Naive thymus-derived CD4-positive, alpha-beta T cell (primary cell): ENCODE measurements at regions of chr19 and their contacts with region 1.

Region 1: DNA sequence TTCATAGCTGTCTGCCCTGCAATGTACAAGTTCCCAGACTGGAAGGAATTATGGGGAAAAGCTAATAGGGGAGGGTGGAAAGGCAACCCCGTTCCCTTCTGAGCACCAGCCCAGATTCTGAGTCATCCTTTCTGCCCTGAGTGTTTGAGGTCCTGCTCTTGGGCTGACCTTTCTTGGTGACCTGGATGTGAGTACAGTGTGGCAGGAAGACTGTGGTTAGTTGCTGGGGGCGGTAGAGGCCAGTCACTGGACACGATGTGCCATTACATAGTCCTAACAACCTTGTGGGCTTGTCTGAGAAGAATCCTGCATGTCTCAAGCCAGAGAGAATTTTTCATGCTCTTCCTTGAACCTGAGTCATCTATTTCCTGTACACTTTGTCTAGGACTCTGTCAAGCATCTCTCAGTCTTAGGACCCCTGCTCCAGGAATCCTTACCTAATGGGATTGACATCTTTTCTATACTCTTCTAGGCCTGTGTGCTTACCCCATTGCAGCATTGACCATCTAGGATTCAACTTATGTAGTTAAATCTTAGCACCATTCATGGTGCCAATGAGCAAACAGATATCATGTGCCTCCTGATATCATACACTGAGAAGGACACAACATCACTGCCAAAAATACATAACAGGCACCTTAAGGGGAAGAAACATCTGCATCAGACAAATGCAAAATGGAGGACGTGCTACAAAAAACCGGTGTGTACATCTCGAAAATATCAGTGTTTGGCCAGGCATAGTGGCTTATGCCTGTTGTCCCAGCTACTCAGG is 8.1 kb upstream of the ANGPTL4 start:
- DNase-seq: no peak
- ATAC-seq: peak; percentile 72
- H3K4me3 ChIP-seq: no peak overlapping the region
- H3K4me3 Mint-ChIP-seq: no peak overlapping the region
- H3K27ac ChIP-seq: no peak overlapping the region
- H3K27ac Mint-ChIP-seq: no peak overlapping the region
- H3K4me1 ChIP-seq: no peaks in the 10 kb centered on the region
- H3K4me1 Mint-ChIP-seq: peaks cover 0 to 17% (median 3%) of the 10 kb centered on the region in 7 donors
- H3K27me3 ChIP-seq: no peaks in the 10 kb centered on the region
- H3K27me3 Mint-ChIP-seq: peaks cover 1 to 18% (median 14%) of the 10 kb centered on the region in 5 donors

Region 2: GRCh38 chr19:8240274-8241229 is 115.3 kb before region 1 on chr19:
- CTCF ChIA-PET with region 1: no interaction called
- POLR2A ChIA-PET with region 1: no interaction called
- intact Hi-C with region 1: no loop called
- DNase-seq: peak in 1 of 9 donors; percentile 20
- ATAC-seq: peak; percentile 87
- H3K4me3 ChIP-seq: no peak overlapping the region
- H3K4me3 Mint-ChIP-seq: peak overlapping the region in 3 of 10 donors; percentile 4 to 60 (median 22)
- H3K27ac ChIP-seq: no peak overlapping the region
- H3K27ac Mint-ChIP-seq: peak overlapping the region in 5 of 9 donors; percentile 25 to 69 (median 55)
- H3K4me1 ChIP-seq: peaks cover 8 to 15% of the 10 kb centered on the region in 2 donors
- H3K4me1 Mint-ChIP-seq: peaks cover 9 to 35% (median 16%) of the 10 kb centered on the region in 7 donors
- H3K27me3 ChIP-seq: no peaks in the 10 kb centered on the region
- H3K27me3 Mint-ChIP-seq: no peaks in the 10 kb centered on the region

Region 3: GRCh38 chr19:8396563-8397203 is 40.9 kb after region 1 on chr19:
- CTCF ChIA-PET with region 1: interaction called, 12 read pairs
- POLR2A ChIA-PET with region 1: no interaction called
- intact Hi-C with region 1: loop called (anchors 1 kb)
- DNase-seq: peak; percentile 36 to 72 (median 54)
- ATAC-seq: peak; percentile 93
- H3K4me3 ChIP-seq: no peak overlapping the region
- H3K4me3 Mint-ChIP-seq: peak overlapping the region in 2 of 10 donors; percentile 29 to 58
- H3K27ac ChIP-seq: no peak overlapping the region
- H3K27ac Mint-ChIP-seq: peak overlapping the region in 8 of 9 donors; percentile 1 to 93 (median 75)
- H3K4me1 ChIP-seq: peaks cover 0 to 8% of the 10 kb centered on the region in 2 donors
- H3K4me1 Mint-ChIP-seq: peaks cover 18 to 40% (median 35%) of the 10 kb centered on the region in 7 donors
- H3K27me3 ChIP-seq: no peaks in the 10 kb centered on the region
- H3K27me3 Mint-ChIP-seq: no peaks in the 10 kb centered on the region

Region 4: GRCh38 chr19:8487137-8487851 is 131.5 kb after region 1 on chr19:
- CTCF ChIA-PET with region 1: interaction called, 5 read pairs
- POLR2A ChIA-PET with region 1: no interaction called
- intact Hi-C with region 1: loop called in 1 of 2 experiments (anchors 10 kb)
- DNase-seq: peak; percentile 38 to 73 (median 59)
- ATAC-seq: peak; percentile 79
- H3K4me3 ChIP-seq: no peak overlapping the region
- H3K4me3 Mint-ChIP-seq: peak overlapping the region; percentile 33 to 85 (median 68)
- H3K27ac ChIP-seq: peak overlapping the region; percentile 48
- H3K27ac Mint-ChIP-seq: peak overlapping the region; percentile 82 to 95 (median 90)
- H3K4me1 ChIP-seq: peaks cover 15 to 26% of the 10 kb centered on the region in 2 donors
- H3K4me1 Mint-ChIP-seq: peaks cover 29 to 47% (median 34%) of the 10 kb centered on the region in 7 donors
- H3K27me3 ChIP-seq: no peaks in the 10 kb centered on the region
- H3K27me3 Mint-ChIP-seq: no peaks in the 10 kb centered on the region

Region 5: DNA sequence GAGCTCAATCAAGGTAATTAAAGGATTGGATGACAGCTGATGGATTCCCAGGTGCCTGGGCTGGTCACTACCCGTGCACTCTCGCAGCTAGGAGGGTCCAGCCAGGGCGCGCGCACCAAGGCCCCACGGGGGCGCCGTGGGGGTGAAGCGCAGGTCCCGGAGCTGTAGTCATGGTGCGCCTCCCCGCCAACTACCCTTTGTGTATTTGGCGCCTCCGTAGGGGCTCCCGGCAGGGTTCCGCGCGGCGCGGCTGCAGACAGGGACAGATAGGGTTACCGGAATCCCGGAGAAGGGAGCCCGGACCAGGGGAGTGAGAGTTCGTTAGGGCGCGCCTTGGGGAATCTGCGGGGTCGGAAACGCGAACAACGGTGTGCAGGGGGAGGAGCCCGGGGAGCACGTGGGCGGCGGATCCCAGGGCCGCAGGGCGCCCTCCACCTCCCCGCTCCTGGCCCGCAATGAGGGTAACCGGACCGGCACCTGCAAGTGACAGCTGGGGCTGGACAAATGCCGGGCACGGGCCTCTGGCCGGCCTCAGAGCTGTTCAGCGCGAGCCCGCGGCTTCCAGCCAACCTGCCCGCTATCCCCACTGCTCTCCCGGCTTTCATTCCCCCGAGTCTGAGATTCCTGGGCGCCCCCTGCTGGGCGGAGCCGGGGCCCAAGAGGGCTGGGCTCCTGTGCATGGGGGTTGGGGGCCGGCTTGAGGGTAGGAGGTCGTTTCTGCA is 150.0 kb after region 1 on chr19:
- CTCF ChIA-PET with region 1: no interaction called
- POLR2A ChIA-PET with region 1: no interaction called
- intact Hi-C with region 1: loop called in 1 of 2 experiments (anchors 5 kb)
- DNase-seq: peak; percentile 40 to 80 (median 65)
- ATAC-seq: peak; percentile 74
- H3K4me3 ChIP-seq: peak overlapping the region; percentile 75
- H3K4me3 Mint-ChIP-seq: peak overlapping the region; percentile 88 to 97 (median 92)
- H3K27ac ChIP-seq: peak overlapping the region; percentile 76
- H3K27ac Mint-ChIP-seq: peak overlapping the region; percentile 75 to 92 (median 86)
- H3K4me1 ChIP-seq: peaks cover 5 to 15% of the 10 kb centered on the region in 2 donors
- H3K4me1 Mint-ChIP-seq: peaks cover 9 to 29% (median 20%) of the 10 kb centered on the region in 7 donors
- H3K27me3 ChIP-seq: no peaks in the 10 kb centered on the region
- H3K27me3 Mint-ChIP-seq: no peaks in the 10 kb centered on the region

Region 6: DNA sequence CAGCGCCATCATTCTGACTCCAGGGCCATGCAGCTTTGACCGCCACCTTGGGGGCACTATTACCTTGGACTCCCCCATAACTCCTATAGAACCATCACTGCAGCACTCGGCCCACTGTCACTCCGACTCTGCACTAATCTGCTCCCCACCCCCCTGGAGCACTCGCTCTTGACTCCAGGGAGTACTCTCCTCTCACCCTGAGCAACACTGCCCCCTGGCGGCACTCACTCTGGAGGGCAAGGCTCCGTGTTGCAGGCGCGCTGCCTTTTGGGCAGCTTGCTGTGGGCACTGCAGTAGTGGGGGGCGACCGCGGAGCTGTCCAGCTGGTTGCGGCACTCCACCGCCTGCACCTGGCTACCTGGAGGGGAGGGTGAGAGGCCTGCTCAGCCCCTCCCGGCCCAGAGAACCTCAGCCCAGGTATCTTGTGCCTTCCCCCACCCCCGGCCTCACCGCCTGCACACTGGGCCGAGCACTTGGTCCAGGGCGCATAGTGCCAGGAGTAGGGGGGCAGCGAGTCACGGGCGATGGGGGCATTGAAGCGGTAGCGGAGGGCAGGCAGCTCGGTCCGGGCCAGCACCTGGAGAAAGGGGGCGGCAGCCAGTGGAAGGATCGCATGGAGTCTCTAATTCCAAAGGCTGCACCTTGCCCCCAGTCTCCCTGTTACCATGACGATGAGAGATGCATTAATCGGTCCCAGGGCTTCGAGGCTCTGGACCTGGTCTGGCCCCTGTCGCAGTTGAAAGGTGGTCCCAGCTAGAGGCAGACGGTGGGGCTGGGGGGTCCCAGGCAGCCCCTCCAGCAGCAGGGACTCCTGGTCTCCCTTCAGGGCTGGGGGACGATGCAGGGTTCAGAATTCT is 230.3 kb after region 1 on chr19:
- CTCF ChIA-PET with region 1: interaction called, 3 read pairs
- POLR2A ChIA-PET with region 1: no interaction called
- intact Hi-C with region 1: loop called (anchors 2 kb)
- DNase-seq: peak in 3 of 9 donors; percentile 27 to 67 (median 37)
- ATAC-seq: peak; percentile 68
- H3K4me3 ChIP-seq: no peak overlapping the region
- H3K4me3 Mint-ChIP-seq: no peak overlapping the region
- H3K27ac ChIP-seq: no peak overlapping the region
- H3K27ac Mint-ChIP-seq: no peak overlapping the region
- H3K4me1 ChIP-seq: no peaks in the 10 kb centered on the region
- H3K4me1 Mint-ChIP-seq: peaks cover 0 to 3% (median 1%) of the 10 kb centered on the region in 7 donors
- H3K27me3 ChIP-seq: no peaks in the 10 kb centered on the region
- H3K27me3 Mint-ChIP-seq: peaks cover 0 to 11% (median 0%) of the 10 kb centered on the region in 5 donors

Region 7: GRCh38 chr19:8641908-8642547 is 286.2 kb after region 1 on chr19:
- CTCF ChIA-PET with region 1: interaction called, 7 read pairs
- POLR2A ChIA-PET with region 1: no interaction called
- intact Hi-C with region 1: loop called in 1 of 2 experiments (anchors 1 kb)
- DNase-seq: peak in 7 of 9 donors; percentile 28 to 67 (median 51)
- ATAC-seq: peak; percentile 56
- H3K4me3 ChIP-seq: no peak overlapping the region
- H3K4me3 Mint-ChIP-seq: peak overlapping the region in 1 of 10 donors; percentile 18
- H3K27ac ChIP-seq: no peak overlapping the region
- H3K27ac Mint-ChIP-seq: peak overlapping the region in 1 of 9 donors; percentile 62
- H3K4me1 ChIP-seq: no peaks in the 10 kb centered on the region
- H3K4me1 Mint-ChIP-seq: peaks cover 5 to 16% (median 7%) of the 10 kb centered on the region in 7 donors
- H3K27me3 ChIP-seq: no peaks in the 10 kb centered on the region
- H3K27me3 Mint-ChIP-seq: peaks cover 12 to 32% (median 15%) of the 10 kb centered on the region in 5 donors

Region 8: GRCh38 chr19:8663920-8664670 is 308.3 kb after region 1 on chr19:
- CTCF ChIA-PET with region 1: no interaction called
- POLR2A ChIA-PET with region 1: no interaction called
- intact Hi-C with region 1: no loop called
- DNase-seq: peak in 5 of 9 donors; percentile 12 to 21 (median 18)
- ATAC-seq: peak; percentile 51
- H3K4me3 ChIP-seq: peak overlapping the region; percentile 10
- H3K4me3 Mint-ChIP-seq: peak overlapping the region in 9 of 10 donors; percentile 16 to 75 (median 60)
- H3K27ac ChIP-seq: no peak overlapping the region
- H3K27ac Mint-ChIP-seq: peak overlapping the region; percentile 26 to 87 (median 65)
- H3K4me1 ChIP-seq: peaks cover 14 to 17% of the 10 kb centered on the region in 2 donors
- H3K4me1 Mint-ChIP-seq: peaks cover 21 to 49% (median 30%) of the 10 kb centered on the region in 7 donors
- H3K27me3 ChIP-seq: no peaks in the 10 kb centered on the region
- H3K27me3 Mint-ChIP-seq: no peaks in the 10 kb centered on the region

Region 9: GRCh38 chr19:8697671-8698432 is 342.0 kb after region 1 on chr19:
- CTCF ChIA-PET with region 1: interaction called, 3 read pairs
- POLR2A ChIA-PET with region 1: no interaction called
- intact Hi-C with region 1: loop called in 1 of 2 experiments (anchors 1 kb)
- DNase-seq: no peak
- ATAC-seq: no peak
- H3K4me3 ChIP-seq: no peak overlapping the region
- H3K4me3 Mint-ChIP-seq: no peak overlapping the region
- H3K27ac ChIP-seq: no peak overlapping the region
- H3K27ac Mint-ChIP-seq: no peak overlapping the region
- H3K4me1 ChIP-seq: peaks cover 26 to 27% of the 10 kb centered on the region in 2 donors
- H3K4me1 Mint-ChIP-seq: peaks cover 21 to 49% (median 24%) of the 10 kb centered on the region in 7 donors
- H3K27me3 ChIP-seq: peaks cover 0 to 4% of the 10 kb centered on the region in 2 donors
- H3K27me3 Mint-ChIP-seq: peaks cover 0 to 21% (median 0%) of the 10 kb centered on the region in 5 donors